Transverse colon (tissue), 4 donors: ENCODE measurements at regions of chr17 and their contacts with region 1.

Region 1: DNA sequence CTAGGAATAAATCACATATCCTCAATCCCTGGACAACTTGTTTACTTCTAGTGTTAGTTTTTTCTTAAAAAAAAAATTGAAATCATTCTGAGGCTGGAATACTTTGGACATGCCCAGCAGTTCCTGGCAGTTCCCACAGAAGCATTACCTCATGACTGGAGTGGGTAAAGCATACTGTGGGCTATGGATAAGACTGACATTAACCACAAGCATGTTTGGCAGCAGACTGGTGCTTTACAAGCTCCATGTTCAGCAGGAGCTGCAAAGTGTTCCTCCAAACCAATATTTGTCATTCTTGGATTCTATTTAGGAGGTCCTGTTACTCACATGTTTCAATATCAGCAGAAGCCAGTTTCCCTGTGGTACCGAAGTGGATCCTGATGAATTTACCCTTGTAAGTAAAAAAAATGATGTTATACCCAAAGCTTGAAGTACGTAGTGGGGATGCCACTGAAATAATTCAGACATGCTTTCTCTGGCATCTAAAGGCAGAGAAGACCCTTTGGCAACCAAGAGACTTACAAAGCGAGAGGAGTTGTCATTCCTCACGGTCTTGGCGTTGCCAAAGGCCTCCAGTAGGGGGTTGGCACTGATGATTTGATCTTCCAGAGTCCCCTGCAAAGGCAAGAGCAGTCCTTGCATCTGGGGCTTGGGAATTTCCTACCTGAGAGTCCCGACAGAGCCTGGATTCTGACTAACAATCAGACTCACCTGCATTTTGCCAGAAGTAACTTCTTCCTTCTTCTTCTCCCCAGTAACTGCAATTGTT is 4.9 kb downstream of the MYH1 start:
- DNase-seq: no peak
- H3K4me3 ChIP-seq: no peak overlapping the region
- H3K27ac ChIP-seq: no peak overlapping the region
- H3K4me1 ChIP-seq: no peaks in the 10 kb centered on the region
- H3K27me3 ChIP-seq: no peaks in the 10 kb centered on the region
- CTCF ChIP-seq: no peak
- EP300 ChIP-seq: no peak
- POLR2A ChIP-seq: no peak

Region 2: GRCh38 chr17:9890124-9890523 is 623.4 kb before region 1 on chr17:
- in situ Hi-C with region 1: no loop called
- intact Hi-C with region 1: no loop called
- DNase-seq: no peak
- H3K4me3 ChIP-seq: no peak overlapping the region
- H3K27ac ChIP-seq: no peak overlapping the region
- H3K4me1 ChIP-seq: no peaks in the 10 kb centered on the region
- H3K27me3 ChIP-seq: no peaks in the 10 kb centered on the region
- CTCF ChIP-seq: peak in 4 of 5 experiments; percentile 28 to 36 (median 31)
- EP300 ChIP-seq: no peak
- POLR2A ChIP-seq: no peak

Region 3: GRCh38 chr17:10527419-10527818 is 13.9 kb after region 1 on chr17:
- in situ Hi-C with region 1: no loop called
- intact Hi-C with region 1: loop called (anchors 1 kb)
- DNase-seq: no peak
- H3K4me3 ChIP-seq: no peak overlapping the region
- H3K27ac ChIP-seq: no peak overlapping the region
- H3K4me1 ChIP-seq: no peaks in the 10 kb centered on the region
- H3K27me3 ChIP-seq: no peaks in the 10 kb centered on the region
- CTCF ChIP-seq: no peak
- EP300 ChIP-seq: no peak
- POLR2A ChIP-seq: no peak

Region 4: GRCh38 chr17:10557422-10557821 is 43.9 kb after region 1 on chr17:
- in situ Hi-C with region 1: no loop called
- intact Hi-C with region 1: no loop called
- DNase-seq: no peak
- H3K4me3 ChIP-seq: no peak overlapping the region
- H3K27ac ChIP-seq: no peak overlapping the region
- H3K4me1 ChIP-seq: no peaks in the 10 kb centered on the region
- H3K27me3 ChIP-seq: no peaks in the 10 kb centered on the region
- CTCF ChIP-seq: no peak
- EP300 ChIP-seq: no peak
- POLR2A ChIP-seq: no peak